ENCODE measurements at regions of chr9 and their contacts with region 1.

Region 1: DNA sequence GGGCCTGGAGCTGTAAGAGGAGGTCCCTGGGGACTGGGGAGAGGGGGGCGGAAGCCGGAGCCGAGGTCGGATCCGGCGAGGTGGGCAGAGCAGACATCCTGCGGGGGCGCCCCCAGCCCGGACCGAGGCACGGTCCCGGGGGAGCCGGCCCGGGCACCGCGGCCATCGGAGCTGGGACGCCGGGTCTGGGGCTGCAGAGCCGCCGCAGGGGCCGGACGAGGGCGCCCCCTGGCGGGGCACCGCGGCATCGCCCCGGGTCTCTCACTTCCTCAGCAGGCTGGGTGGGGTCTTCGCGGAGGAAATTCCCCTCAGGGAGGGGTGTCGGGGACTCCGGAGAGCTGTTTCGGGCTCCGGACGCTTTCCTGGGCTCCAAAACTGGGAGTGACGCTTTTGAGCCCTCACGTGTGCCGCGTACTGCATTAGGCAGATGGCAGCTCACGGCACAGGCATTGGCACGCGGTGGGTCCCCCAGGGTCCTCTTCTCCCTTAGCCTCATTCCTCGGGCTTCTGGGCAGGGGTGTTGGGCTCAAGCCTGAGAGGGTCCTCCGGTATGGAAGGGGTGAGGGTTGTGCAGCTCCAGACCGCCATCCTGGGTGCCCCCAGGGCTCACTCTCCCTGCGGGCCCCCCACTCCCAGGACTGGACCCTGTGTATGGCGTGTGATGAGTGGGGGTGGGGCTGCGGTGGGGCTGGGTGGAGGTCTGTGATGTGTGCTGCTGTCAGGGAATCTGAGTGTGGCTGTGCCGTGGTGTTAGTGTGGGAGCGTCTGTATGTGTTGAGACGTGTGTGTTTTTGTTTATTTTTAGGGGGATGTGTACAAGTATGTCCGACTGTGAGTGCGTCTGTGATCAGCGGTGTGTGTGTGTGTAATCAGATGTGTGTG is 29.6 kb downstream of the LHX2 start:
- DNase-seq: peak; percentile 58
- H3K4me3 ChIP-seq: peak overlapping the region; percentile 23 to 54 (median 36)
- H3K27ac ChIP-seq: no peak overlapping the region
- H3K4me1 ChIP-seq: peaks cover 10 to 25% (median 22%) of the 10 kb centered on the region in 4 donors
- H3K27me3 ChIP-seq: peaks cover 91% of the 10 kb centered on the region
- CTCF ChIP-seq: peak; percentile 75 to 98 (median 96)
- EP300 ChIP-seq: no peak
- POLR2A ChIP-seq: no peak

Region 2: DNA sequence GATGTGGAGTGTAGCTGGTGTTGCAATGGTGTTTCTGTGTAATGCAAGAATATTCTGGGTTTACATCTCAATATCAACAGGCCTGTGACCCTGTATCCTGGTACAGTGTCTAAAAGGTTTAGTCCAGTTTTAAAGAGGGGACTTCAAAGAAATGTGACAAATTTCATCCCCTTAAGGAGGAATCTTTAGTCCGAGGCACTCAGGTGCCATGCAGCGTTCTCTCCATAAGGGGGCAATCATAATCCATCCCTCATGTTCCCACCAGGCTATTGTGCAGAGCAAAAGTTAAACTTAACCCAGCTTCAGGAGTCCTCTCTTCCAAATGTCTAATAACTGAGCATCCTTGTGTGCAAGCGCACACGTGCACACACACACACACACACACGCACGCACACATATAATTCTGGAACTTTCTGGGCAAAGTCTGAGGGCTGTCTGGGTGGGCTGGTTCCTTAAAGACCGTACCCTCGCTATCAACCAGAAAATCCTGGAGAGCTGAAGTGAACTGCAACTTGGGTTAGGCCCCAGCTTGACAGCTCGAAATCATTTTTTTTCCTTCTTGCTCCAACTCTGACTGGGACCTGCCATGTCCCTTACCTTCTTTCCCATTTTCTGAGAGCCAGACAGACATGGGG is 639.2 kb before region 1 on chr9:
- in situ Hi-C with region 1: loop called in 3 of 4 experiments (anchors 25 kb)
- intact Hi-C with region 1: loop called (anchors 2 kb)
- DNase-seq: peak; percentile 41
- H3K4me3 ChIP-seq: no peak overlapping the region
- H3K27ac ChIP-seq: no peak overlapping the region
- H3K4me1 ChIP-seq: no peaks in the 10 kb centered on the region
- H3K27me3 ChIP-seq: no peaks in the 10 kb centered on the region
- CTCF ChIP-seq: peak; percentile 60 to 76 (median 68)
- EP300 ChIP-seq: no peak
- POLR2A ChIP-seq: no peak

Region 3: DNA sequence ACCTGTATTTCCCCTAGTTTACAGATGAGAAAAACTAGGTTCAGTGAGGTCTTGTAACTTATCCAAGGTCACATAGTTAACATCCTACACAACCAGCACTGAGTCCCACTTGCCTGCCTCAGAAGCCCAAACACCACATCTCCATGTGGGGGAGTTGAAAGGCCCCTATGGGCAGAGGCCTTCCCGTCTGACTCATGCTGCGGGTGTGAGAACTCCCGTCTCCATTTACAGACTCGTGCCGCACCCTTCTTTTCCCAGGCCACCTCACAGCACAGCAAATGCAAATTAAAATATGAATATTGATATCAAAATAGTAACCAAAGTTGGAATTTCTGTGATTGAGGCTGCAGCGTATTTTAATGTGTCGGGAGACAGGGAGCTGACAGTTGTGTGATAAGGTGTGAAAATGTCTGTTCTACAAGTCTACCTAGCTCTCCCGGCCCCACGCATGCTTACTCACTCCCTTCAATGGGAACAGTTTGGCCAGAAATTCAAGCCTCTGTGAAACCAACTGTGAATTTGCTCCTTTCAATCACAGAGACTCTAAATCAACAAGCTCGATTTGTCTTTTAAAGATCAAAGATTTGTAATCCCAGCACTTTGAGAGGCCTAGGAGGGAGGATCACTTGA is 595.1 kb before region 1 on chr9:
- in situ Hi-C with region 1: no loop called
- intact Hi-C with region 1: no loop called
- DNase-seq: no peak
- H3K4me3 ChIP-seq: no peak overlapping the region
- H3K27ac ChIP-seq: no peak overlapping the region
- H3K4me1 ChIP-seq: no peaks in the 10 kb centered on the region
- H3K27me3 ChIP-seq: no peaks in the 10 kb centered on the region
- CTCF ChIP-seq: no peak
- EP300 ChIP-seq: no peak
- POLR2A ChIP-seq: no peak

Region 4: GRCh38 chr9:123544007-123544827 is 497.0 kb before region 1 on chr9:
- in situ Hi-C with region 1: loop called (anchors 5 to 25 kb)
- intact Hi-C with region 1: loop called (anchors 2 kb)
- DNase-seq: peak; percentile 31
- H3K4me3 ChIP-seq: no peak overlapping the region
- H3K27ac ChIP-seq: no peak overlapping the region
- H3K4me1 ChIP-seq: peaks cover 0 to 4% (median 0%) of the 10 kb centered on the region in 4 donors
- H3K27me3 ChIP-seq: no peaks in the 10 kb centered on the region
- CTCF ChIP-seq: peak; percentile 75 to 90 (median 76)
- EP300 ChIP-seq: no peak
- POLR2A ChIP-seq: no peak

Region 5: DNA sequence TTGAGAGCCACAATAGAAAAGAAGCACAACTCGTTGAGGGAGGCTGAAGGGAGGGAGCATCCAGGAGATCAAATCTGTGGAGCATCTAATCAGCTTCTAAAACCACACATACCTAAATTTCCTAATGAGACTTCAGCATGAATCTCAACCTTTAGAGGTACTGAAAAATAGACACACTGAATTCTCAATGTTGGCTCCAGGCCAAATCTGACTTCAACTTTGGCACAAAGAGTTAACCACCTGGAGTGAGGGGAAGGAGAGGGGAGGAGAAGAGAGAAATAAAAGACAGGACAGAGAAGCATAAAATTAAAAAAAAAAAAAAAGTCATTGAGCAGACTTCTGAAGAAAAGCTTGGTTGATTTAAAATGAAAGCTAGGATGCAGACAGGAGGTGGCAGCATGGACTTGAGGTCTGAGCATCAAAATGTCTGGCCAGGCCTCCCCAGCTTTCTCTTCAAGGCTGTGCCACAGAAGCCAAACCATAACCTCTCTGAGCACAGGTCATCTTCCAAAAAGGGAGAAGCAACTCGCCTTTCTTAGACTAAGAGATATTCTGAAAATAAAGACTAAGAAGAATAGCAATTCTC is 316.9 kb before region 1 on chr9:
- in situ Hi-C with region 1: loop called in 1 of 4 experiments (anchors 25 kb)
- intact Hi-C with region 1: no loop called
- DNase-seq: no peak
- H3K4me3 ChIP-seq: no peak overlapping the region
- H3K27ac ChIP-seq: no peak overlapping the region
- H3K4me1 ChIP-seq: no peaks in the 10 kb centered on the region
- H3K27me3 ChIP-seq: no peaks in the 10 kb centered on the region
- CTCF ChIP-seq: peak in 3 of 5 experiments; percentile 8 to 23 (median 14)
- EP300 ChIP-seq: no peak
- POLR2A ChIP-seq: no peak

Region 6: GRCh38 chr9:124098141-124099090 is 57.2 kb after region 1 on chr9:
- in situ Hi-C with region 1: no loop called
- intact Hi-C with region 1: no loop called
- DNase-seq: no peak
- H3K4me3 ChIP-seq: no peak overlapping the region
- H3K27ac ChIP-seq: no peak overlapping the region
- H3K4me1 ChIP-seq: no peaks in the 10 kb centered on the region
- H3K27me3 ChIP-seq: peaks cover 34% of the 10 kb centered on the region
- CTCF ChIP-seq: no peak
- EP300 ChIP-seq: no peak
- POLR2A ChIP-seq: no peak

Measured in transverse colon (tissue), 4 donors.